ENCODE measurements at regions of chr2 and their contacts with region 1.

Region 1: GRCh38 chr2:60581433-60582282 is 28.2 kb upstream of the BCL11A start:
- DNase-seq: peak; percentile 37 to 78 (median 68)
- H3K4me3 ChIP-seq: peak overlapping the region in 1 of 4 donors; percentile 51
- H3K27ac ChIP-seq: no peak overlapping the region
- H3K4me1 ChIP-seq: peaks cover 2 to 9% of the 10 kb centered on the region in 2 donors
- H3K27me3 ChIP-seq: peaks cover 8% of the 10 kb centered on the region
- CTCF ChIP-seq: peak; percentile 50 to 98 (median 80)
- POLR2A ChIP-seq: no peak

Region 2: GRCh38 chr2:58584606-58585118 is 1997.0 kb before region 1 on chr2:
- intact Hi-C with region 1: loop called in 1 of 2 experiments (anchors 10 kb)
- DNase-seq: no peak
- H3K4me3 ChIP-seq: no peak overlapping the region
- H3K27ac ChIP-seq: no peak overlapping the region
- H3K4me1 ChIP-seq: no peaks in the 10 kb centered on the region
- H3K27me3 ChIP-seq: no peaks in the 10 kb centered on the region
- CTCF ChIP-seq: no peak
- POLR2A ChIP-seq: no peak

Region 3: DNA sequence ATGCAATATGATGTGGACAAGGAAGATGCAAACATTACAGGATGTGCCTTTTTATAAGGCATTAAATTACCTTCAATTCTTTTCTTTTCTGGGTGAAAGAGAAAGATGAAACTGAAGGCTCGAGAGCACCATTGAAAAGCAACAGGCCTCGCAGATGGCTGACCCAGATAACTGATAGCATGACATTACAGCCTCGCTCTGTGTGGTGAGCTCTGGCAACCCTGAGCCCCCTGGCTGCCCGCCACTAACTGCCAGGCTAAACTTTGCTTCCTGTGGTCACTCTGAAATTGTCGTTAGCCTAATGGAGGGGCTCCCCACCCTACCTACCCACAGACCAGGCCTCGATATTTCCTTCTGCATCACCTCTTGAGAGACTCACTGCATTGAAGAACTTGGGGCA is 1823.7 kb before region 1 on chr2:
- intact Hi-C with region 1: loop called in 1 of 2 experiments (anchors 10 kb)
- DNase-seq: no peak
- H3K4me3 ChIP-seq: no peak overlapping the region
- H3K27ac ChIP-seq: no peak overlapping the region
- H3K4me1 ChIP-seq: no peaks in the 10 kb centered on the region
- H3K27me3 ChIP-seq: no peaks in the 10 kb centered on the region
- CTCF ChIP-seq: no peak
- POLR2A ChIP-seq: no peak

Region 4: GRCh38 chr2:59025157-59025757 is 1556.4 kb before region 1 on chr2:
- intact Hi-C with region 1: loop called in 1 of 2 experiments (anchors 10 kb)
- DNase-seq: peak; percentile 14 to 63 (median 39)
- H3K4me3 ChIP-seq: no peak overlapping the region
- H3K27ac ChIP-seq: no peak overlapping the region
- H3K4me1 ChIP-seq: no peaks in the 10 kb centered on the region
- H3K27me3 ChIP-seq: no peaks in the 10 kb centered on the region
- CTCF ChIP-seq: peak; percentile 61 to 77 (median 72)
- POLR2A ChIP-seq: no peak

Region 5: GRCh38 chr2:60047944-60048525 is 533.6 kb before region 1 on chr2:
- intact Hi-C with region 1: no loop called
- DNase-seq: peak in 2 of 7 donors; percentile 12 to 19
- H3K4me3 ChIP-seq: no peak overlapping the region
- H3K27ac ChIP-seq: no peak overlapping the region
- H3K4me1 ChIP-seq: no peaks in the 10 kb centered on the region
- H3K27me3 ChIP-seq: no peaks in the 10 kb centered on the region
- CTCF ChIP-seq: no peak
- POLR2A ChIP-seq: no peak